Panc1 (cell line): ENCODE measurements at regions of chr14 and their contacts with region 1.

Region 1: DNA sequence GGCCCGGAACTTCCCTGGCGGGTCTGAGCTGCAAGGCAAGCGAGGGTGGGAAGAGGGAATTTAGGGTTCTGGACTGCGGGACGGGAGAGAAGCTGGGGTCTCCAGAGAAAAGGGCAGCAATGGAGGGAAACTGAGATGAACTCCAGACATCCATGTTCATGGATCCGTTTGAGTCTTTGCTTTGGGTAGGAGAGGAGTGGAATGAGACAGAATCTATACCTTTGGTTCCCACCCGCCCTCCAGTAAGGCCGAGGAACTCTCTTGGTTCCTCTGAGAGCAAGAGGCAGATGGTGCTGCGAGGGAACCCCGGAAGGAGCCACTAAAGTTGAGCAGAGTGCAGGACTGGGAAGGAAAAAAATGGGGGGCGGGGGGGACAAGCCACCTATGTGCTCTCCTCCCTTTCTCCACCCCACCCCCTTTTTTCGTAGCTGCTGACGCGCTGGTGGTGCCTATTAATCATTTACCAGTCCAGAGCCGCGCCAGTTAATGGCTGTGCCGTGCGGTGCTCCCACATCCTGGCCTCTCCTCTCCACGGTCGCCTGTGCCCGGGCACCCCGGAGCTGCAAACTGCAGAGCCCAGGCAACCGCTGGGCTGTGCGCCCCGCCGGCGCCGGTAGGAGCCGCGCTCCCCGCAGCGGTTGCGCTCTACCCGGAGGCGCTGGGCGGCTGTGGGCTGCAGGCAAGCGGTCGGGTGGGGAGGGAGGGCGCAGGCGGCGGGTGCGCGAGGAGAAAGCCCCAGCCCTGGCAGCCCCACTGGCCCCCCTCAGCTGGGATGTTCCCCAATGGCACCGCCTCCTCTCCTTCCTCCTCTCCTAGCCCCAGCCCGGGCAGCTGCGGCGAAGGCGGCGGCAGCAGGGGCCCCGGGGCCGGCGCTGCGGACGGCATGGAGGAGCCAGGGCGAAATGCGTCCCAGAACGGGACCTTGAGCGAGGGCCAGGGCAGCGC is 1.2 kb downstream of the SSTR1 start:
- DNase-seq: no peak
- ATAC-seq: peak; percentile 58
- H3K4me3 ChIP-seq: no peak overlapping the region
- H3K27ac ChIP-seq: no peak overlapping the region
- H3K4me1 ChIP-seq: no peaks in the 10 kb centered on the region
- H3K27me3 ChIP-seq: peaks cover 17% of the 10 kb centered on the region
- CTCF ChIP-seq: no peak

Region 2: GRCh38 chr14:38089123-38089522 is 119.8 kb before region 1 on chr14:
- CTCF ChIA-PET with region 1: interaction called, 12 read pairs
- POLR2A ChIA-PET with region 1: no interaction called
- in situ Hi-C with region 1: no loop called
- intact Hi-C with region 1: no loop called
- DNase-seq: no peak
- ATAC-seq: no peak
- H3K4me3 ChIP-seq: peak overlapping the region in 1 of 2 experiments; percentile 14; a peak in 2 of 4 replicates
- H3K27ac ChIP-seq: no peak overlapping the region
- H3K4me1 ChIP-seq: no peaks in the 10 kb centered on the region
- H3K27me3 ChIP-seq: no peaks in the 10 kb centered on the region
- CTCF ChIP-seq: no peak